ENCODE measurements at regions of chr1 and their contacts with region 1.

Region 1: GRCh38 chr1:152926091-152926490 is 17.7 kb downstream of the IVL start:
- DNase-seq: peak; percentile 45
- CTCF ChIP-seq: peak; percentile 73

Region 2: GRCh38 chr1:152654110-152654509 is 272.0 kb before region 1 on chr1:
- in situ Hi-C with region 1: loop called (anchors 25 kb)
- DNase-seq: peak; percentile 65
- CTCF ChIP-seq: peak; percentile 73

Region 3: GRCh38 chr1:152869808-152870419 is 56.2 kb before region 1 on chr1:
- in situ Hi-C with region 1: loop called (anchors 10 kb)
- DNase-seq: peak; percentile 72
- CTCF ChIP-seq: peak; percentile 73